ENCODE measurements at regions of chr7 and their contacts with region 1.

Region 1: DNA sequence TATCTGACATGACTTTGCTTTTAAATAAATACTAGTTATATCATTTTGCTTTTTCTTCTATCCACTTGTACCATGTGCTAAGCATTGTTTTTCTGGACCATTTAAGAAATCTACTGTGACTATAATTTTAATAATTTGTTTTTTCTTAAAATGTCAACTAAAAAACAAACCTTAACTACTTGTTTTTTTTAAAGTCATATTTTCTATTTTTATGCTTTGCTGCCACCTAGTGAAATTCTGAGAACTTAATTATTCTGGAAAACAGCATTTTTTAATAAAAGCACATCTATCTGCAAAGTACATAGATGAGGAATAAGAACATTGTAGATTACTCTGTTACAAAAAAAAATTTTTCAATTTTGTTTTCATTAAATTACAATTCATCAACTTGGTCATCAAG is 47.4 kb downstream of the ORC5 start:
- DNase-seq: no peak
- ATAC-seq: no peak
- H3K4me3 ChIP-seq: no peak overlapping the region
- H3K27ac ChIP-seq: no peak overlapping the region
- H3K4me1 ChIP-seq: no peaks in the 10 kb centered on the region
- H3K27me3 ChIP-seq: no peaks in the 10 kb centered on the region
- CTCF ChIP-seq: peak in 2 of 4 donors; percentile 10 to 19

Region 2: DNA sequence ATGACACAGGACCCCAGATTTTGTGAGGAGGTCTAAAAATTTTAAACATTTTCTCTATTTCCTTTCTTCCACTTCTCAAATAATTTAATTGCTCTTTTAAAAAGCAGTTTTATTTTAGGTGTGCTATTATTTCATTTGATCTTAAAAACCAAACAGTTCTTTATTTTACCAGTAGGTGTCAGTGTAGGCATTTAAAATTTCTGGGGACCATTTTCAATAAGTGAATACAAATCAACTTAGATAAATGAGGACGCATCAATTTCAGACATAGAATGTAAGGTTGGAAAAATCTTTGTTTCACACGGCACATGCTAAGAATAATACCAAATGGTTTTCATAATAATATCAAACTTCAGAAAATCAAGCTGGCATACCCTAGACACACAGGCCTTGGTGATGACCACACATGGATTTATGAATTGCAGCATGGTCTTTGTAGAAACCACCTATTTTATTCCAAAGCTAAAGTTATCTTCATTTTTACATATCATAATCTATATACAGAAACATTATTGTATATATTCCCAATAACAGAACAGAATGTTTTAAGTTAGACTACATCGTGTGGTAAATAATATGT is 586.8 kb before region 1 on chr7:
- intact Hi-C with region 1: loop called in 2 of 3 experiments (anchors 5 to 10 kb)
- DNase-seq: no peak
- ATAC-seq: peak in 3 of 4 donors; percentile 46 to 60 (median 60)
- H3K4me3 ChIP-seq: no peak overlapping the region
- H3K27ac ChIP-seq: no peak overlapping the region
- H3K4me1 ChIP-seq: no peaks in the 10 kb centered on the region
- H3K27me3 ChIP-seq: no peaks in the 10 kb centered on the region
- CTCF ChIP-seq: peak; percentile 16 to 72 (median 48)